ENCODE measurements at regions of chr2 and their contacts with region 1.

Region 1: GRCh38 chr2:181058378-181059269 is 78.2 kb downstream of the UBE2E3 start:
- H3K4me3 Mint-ChIP-seq: no peak overlapping the region
- H3K27ac Mint-ChIP-seq: no peak overlapping the region
- H3K4me1 Mint-ChIP-seq: peaks cover 7% of the 10 kb centered on the region
- H3K27me3 Mint-ChIP-seq: no peaks in the 10 kb centered on the region

Region 2: DNA sequence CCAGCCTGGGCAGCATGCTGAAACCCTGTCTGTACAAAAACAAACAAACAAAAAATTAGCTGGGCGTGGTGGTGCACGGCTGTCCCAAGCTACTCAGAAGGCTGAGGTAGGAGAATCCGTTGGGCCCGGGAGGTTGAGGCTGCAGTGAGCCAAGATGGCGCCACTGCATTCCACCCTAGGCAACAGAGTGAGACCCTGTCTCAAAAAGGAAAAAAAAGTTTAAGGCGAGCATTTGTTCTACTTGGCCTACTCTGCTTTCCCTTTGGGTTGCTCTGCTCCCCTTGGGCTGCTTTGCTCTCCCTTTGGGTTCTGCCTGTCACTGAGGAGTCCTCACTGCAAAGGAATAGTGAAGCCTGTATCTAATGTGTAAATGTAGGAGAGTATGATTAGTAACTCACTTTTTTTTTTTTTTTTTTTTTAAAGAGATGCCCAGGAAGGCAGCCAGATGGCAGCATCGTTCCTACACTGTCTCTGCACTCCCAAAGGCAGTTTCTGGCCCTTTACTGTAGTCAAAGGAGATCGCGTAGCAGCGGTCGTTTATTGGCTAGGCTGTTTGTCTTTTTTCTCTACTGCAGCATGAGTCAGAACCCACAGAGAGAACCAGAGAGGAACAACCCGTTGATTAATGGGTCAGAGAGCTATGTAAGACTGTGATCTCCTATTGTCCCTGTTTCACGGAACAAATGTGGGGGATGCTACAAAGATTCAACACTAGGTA is 933.2 kb before region 1 on chr2:
- intact Hi-C with region 1: loop called (anchors 2 kb)
- H3K4me3 Mint-ChIP-seq: no peak overlapping the region
- H3K27ac Mint-ChIP-seq: no peak overlapping the region
- H3K4me1 Mint-ChIP-seq: no peaks in the 10 kb centered on the region
- H3K27me3 Mint-ChIP-seq: peaks cover 3% of the 10 kb centered on the region

Region 3: DNA sequence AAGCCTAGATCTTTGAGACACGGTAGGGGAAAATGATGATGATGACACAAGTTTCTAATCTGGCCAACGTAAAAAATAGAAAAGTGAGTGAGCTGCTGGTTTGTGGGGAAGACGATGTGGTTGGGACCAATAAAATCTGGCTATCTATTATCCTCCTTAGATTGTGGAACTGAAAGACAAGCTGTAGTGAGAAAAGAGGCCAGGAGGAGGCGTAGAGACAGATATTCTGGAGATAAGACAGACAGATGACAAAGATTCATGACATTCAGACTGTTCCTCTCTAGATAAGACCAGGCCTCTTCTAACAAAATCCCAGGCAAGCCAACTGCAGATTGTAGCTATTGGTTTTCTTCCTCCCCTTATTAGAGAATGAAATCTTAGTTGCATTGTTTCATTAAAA is 454.5 kb before region 1 on chr2:
- intact Hi-C with region 1: loop called (anchors 5 kb)
- H3K4me3 Mint-ChIP-seq: no peak overlapping the region
- H3K27ac Mint-ChIP-seq: no peak overlapping the region
- H3K4me1 Mint-ChIP-seq: no peaks in the 10 kb centered on the region
- H3K27me3 Mint-ChIP-seq: no peaks in the 10 kb centered on the region

Region 4: DNA sequence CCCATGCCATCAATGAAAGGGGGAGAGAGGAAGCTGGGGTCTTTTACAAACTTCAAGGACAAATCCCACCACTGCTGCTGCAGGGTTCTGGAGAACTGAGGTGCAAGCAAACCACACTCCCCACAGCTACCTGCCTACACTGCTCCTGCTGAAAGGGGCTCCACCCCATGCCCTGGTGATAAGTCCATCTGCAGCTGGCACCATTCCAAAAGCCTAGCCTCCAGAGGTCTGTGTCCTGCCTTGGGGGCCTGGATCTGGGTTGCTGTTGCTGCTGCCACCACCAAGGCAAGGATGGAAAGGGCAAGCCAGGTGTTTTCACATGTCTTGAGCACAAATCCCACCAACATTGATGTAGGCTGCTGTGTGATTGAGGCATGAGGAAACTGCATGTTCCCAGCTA is 175.7 kb before region 1 on chr2:
- intact Hi-C with region 1: no loop called
- H3K4me3 Mint-ChIP-seq: no peak overlapping the region
- H3K27ac Mint-ChIP-seq: no peak overlapping the region
- H3K4me1 Mint-ChIP-seq: no peaks in the 10 kb centered on the region
- H3K27me3 Mint-ChIP-seq: no peaks in the 10 kb centered on the region

Region 5: GRCh38 chr2:181008407-181008806 is 50.2 kb before region 1 on chr2:
- intact Hi-C with region 1: no loop called
- H3K4me3 Mint-ChIP-seq: no peak overlapping the region
- H3K27ac Mint-ChIP-seq: peak overlapping the region; percentile 14
- H3K4me1 Mint-ChIP-seq: peaks cover 6% of the 10 kb centered on the region
- H3K27me3 Mint-ChIP-seq: no peaks in the 10 kb centered on the region

Region 6: GRCh38 chr2:181037922-181038321 is 20.7 kb before region 1 on chr2:
- intact Hi-C with region 1: no loop called
- H3K4me3 Mint-ChIP-seq: no peak overlapping the region
- H3K27ac Mint-ChIP-seq: no peak overlapping the region
- H3K4me1 Mint-ChIP-seq: no peaks in the 10 kb centered on the region
- H3K27me3 Mint-ChIP-seq: no peaks in the 10 kb centered on the region

Measured in dendritic cell treated with granulocyte-macrophage colony-stimulating factor and Interleukin-4, amounts not matched to agents 40 ng/mL and 50 ng/mL, for 4 days (primary cell).